Right cardiac atrium (tissue), 5 donors: ENCODE measurements at regions of chr2 and their contacts with region 1.

Region 1: GRCh38 chr2:54522624-54523281 is 66.6 kb downstream of the SPTBN1 start:
- DNase-seq: no peak
- ATAC-seq: peak in 1 of 2 donors; percentile 51
- H3K4me3 ChIP-seq: no peak overlapping the region
- H3K27ac ChIP-seq: no peak overlapping the region
- H3K4me1 ChIP-seq: peaks cover 24% of the 10 kb centered on the region
- H3K27me3 ChIP-seq: no peaks in the 10 kb centered on the region

Region 2: GRCh38 chr2:54482715-54483114 is 40.0 kb before region 1 on chr2:
- intact Hi-C with region 1: no loop called
- DNase-seq: peak; percentile 60 to 80 (median 73)
- ATAC-seq: peak; percentile 78 to 85
- H3K4me3 ChIP-seq: no peak overlapping the region
- H3K27ac ChIP-seq: peak overlapping the region; percentile 0
- H3K4me1 ChIP-seq: peaks cover 26% of the 10 kb centered on the region
- H3K27me3 ChIP-seq: no peaks in the 10 kb centered on the region

Region 3: DNA sequence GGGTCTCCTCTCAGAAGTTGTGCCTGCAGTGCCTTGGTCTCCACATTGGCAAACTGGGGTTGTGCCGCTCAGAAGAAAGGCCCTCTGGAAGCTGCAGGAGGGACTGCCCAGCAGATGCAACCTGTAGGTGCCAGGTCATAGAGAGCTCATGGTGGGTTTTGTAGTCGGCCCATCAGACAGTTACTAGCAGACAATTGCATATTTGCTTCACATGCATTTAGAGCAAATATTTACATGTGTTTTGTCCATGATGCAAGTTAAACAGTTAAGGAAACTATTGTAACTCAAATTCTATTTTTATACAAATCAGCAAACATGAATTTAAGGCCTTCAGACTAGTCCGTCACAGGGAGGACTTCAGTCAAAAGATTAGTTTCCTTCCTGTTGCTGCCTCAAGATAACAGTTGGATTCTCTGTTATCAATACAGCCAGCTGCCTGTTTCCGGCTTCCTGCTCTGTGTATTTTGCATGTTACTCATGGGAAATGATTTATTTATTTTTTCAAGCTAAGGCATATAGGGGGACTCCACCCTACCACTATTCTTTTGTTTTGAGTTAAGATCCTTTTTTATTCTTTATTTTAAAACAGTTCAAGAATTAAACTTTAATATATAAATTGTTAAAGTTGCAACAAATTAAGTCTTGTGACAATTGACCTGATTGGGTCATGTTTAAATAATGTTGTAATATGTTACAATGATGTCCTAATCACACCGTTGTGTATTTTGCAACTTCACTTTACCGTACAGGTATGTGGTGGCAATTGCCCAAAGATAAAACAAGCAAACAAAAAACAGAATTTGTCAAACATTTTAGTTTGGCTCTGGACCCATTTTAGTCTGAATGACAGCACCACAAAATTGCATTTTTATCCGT is 66.8 kb after region 1 on chr2:
- intact Hi-C with region 1: no loop called
- DNase-seq: no peak
- ATAC-seq: peak; percentile 77 to 88
- H3K4me3 ChIP-seq: no peak overlapping the region
- H3K27ac ChIP-seq: peak overlapping the region; percentile 92
- H3K4me1 ChIP-seq: peaks cover 22% of the 10 kb centered on the region
- H3K27me3 ChIP-seq: no peaks in the 10 kb centered on the region

Region 4: DNA sequence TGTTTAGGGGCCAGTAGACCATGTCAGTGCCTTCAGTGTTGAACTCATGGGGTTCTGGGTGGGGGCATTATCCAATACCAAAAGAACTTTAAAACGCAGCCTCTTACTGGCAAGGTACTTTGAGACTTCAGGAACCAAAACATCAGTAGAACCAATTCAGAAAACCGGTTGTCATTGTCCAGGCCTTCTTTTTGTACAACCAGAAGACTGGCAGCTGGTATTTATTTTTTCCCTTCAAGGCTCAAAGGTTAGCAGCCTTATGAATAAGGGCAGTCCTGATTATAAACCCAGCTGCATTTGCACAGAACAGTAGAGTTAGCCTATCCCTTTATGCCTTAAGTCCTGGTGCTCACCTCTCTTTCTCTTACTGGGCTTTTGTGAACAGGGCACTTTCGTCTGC is 86.9 kb after region 1 on chr2:
- intact Hi-C with region 1: loop called in 1 of 4 experiments (anchors 2 kb)
- DNase-seq: no peak
- ATAC-seq: no peak
- H3K4me3 ChIP-seq: no peak overlapping the region
- H3K27ac ChIP-seq: no peak overlapping the region
- H3K4me1 ChIP-seq: peaks cover 22% of the 10 kb centered on the region
- H3K27me3 ChIP-seq: no peaks in the 10 kb centered on the region

Region 5: GRCh38 chr2:54634564-54635511 is 112.1 kb after region 1 on chr2:
- intact Hi-C with region 1: loop called in 2 of 4 experiments (anchors 10 kb)
- DNase-seq: peak; percentile 65 to 74 (median 70)
- ATAC-seq: peak; percentile 65 to 90
- H3K4me3 ChIP-seq: no peak overlapping the region
- H3K27ac ChIP-seq: peak overlapping the region; percentile 98
- H3K4me1 ChIP-seq: peaks cover 42% of the 10 kb centered on the region
- H3K27me3 ChIP-seq: no peaks in the 10 kb centered on the region